Naive thymus-derived CD4-positive, alpha-beta T cell (primary cell): ENCODE measurements at regions of chr2 and their contacts with region 1.

Region 1: DNA sequence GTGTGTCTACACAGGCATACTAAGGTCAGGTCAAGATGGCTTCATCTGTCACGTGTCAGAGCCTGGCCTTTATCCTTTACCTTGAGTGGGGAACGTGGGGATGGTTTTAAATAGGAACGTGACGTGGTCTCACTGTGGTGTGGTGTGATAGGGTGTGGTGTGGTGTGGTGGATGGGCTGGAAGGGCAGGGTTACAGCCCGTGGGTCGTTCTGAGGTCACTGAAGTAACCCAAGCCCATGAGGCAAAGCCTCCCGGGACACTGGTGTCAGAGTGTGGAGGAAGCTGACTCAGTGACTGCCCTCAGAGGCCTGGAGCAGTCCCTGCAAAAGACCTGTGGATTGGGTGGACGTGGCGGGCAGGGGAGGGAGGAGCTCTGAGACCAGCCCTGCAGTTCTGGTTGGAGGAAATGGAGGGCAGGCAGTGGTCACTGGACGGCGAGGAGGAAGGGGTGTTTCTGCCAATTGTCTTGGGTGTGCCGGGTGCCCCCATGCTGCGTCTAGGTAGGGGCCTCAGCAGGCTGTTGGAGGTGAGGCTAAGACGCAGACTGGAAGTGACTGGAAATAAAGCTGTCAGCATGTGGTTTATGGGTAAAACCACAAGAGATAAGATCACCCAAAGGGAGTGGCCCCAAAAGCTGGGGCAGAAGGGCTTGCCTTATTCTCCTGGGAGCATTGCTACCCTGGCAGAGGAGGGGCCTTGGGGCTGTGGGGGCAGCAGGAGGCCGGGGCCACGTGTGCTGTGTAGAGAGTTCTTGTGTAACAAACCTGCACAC is 84.8 kb downstream of the SH3RF3 start:
- DNase-seq: peak; percentile 39 to 87 (median 81)
- ATAC-seq: peak; percentile 82
- H3K4me3 ChIP-seq: no peak overlapping the region
- H3K4me3 Mint-ChIP-seq: peak overlapping the region; percentile 56 to 83 (median 78)
- H3K27ac ChIP-seq: no peak overlapping the region
- H3K27ac Mint-ChIP-seq: peak overlapping the region; percentile 54 to 95 (median 77)
- H3K4me1 ChIP-seq: peaks cover 44 to 56% of the 10 kb centered on the region in 2 donors
- H3K4me1 Mint-ChIP-seq: peaks cover 60 to 79% (median 72%) of the 10 kb centered on the region in 7 donors
- H3K27me3 ChIP-seq: peaks cover 16 to 23% of the 10 kb centered on the region in 2 donors
- H3K27me3 Mint-ChIP-seq: peaks cover 58 to 74% (median 61%) of the 10 kb centered on the region in 5 donors

Region 2: GRCh38 chr2:108968619-108969018 is 245.2 kb before region 1 on chr2:
- CTCF ChIA-PET with region 1: no interaction called
- POLR2A ChIA-PET with region 1: no interaction called
- intact Hi-C with region 1: no loop called
- DNase-seq: no peak
- ATAC-seq: no peak
- H3K4me3 ChIP-seq: no peak overlapping the region
- H3K4me3 Mint-ChIP-seq: peak overlapping the region in 8 of 10 donors; percentile 1 to 81 (median 54)
- H3K27ac ChIP-seq: peak overlapping the region; percentile 10
- H3K27ac Mint-ChIP-seq: peak overlapping the region in 8 of 9 donors; percentile 28 to 91 (median 72)
- H3K4me1 ChIP-seq: peaks cover 21 to 71% of the 10 kb centered on the region in 2 donors
- H3K4me1 Mint-ChIP-seq: peaks cover 21 to 100% (median 95%) of the 10 kb centered on the region in 7 donors
- H3K27me3 ChIP-seq: no peaks in the 10 kb centered on the region
- H3K27me3 Mint-ChIP-seq: no peaks in the 10 kb centered on the region

Region 3: DNA sequence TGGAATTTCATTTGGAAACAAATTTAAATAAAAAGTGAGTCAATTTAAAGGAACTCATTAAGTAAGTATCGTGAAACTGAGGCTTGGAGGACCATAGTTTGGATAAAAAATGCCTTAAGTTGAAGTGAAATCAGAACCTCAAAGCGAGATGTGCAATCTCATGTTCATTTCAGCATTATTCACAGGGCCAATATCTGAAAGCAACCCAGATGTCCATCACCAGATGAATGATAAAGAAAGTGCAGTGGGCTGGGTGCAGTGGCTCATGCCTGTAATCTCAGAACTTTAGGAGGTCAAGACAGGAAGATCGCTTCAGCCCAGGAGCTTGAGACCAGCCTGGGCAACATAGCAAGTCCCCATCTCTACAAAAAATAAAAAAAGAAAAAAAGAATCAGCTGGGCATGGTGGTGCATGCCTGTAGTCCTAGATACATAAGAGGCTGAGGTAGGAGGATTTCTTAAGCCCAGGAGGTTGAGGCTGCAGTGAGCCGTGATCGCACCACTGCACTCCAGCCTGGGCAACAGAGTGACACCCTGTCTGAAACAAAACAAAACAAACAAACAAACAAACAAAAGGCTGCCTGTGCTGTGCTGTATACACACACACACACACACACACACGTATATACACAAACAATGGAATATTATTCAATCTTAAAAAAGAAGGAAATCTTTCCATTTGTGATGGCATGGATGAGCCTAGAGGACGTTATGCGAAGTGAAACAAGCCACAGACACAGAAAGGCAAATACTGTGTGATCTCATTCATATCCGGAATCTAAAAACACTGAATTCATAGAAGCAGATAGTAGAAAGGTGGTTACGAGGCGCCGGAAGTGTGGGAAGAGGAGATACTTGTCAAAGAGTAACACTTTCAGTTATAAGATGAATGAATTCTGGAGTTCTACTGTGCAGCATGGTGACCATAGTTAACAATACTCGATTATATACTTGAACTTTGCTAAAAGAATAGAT is 70.3 kb before region 1 on chr2:
- CTCF ChIA-PET with region 1: no interaction called
- POLR2A ChIA-PET with region 1: interaction called, 3 read pairs
- intact Hi-C with region 1: loop called (anchors 1 kb)
- DNase-seq: peak in 8 of 9 donors; percentile 60 to 82 (median 76)
- ATAC-seq: peak; percentile 86
- H3K4me3 ChIP-seq: peak overlapping the region; percentile 4
- H3K4me3 Mint-ChIP-seq: peak overlapping the region; percentile 39 to 80 (median 70)
- H3K27ac ChIP-seq: peak overlapping the region; percentile 37
- H3K27ac Mint-ChIP-seq: peak overlapping the region; percentile 6 to 92 (median 84)
- H3K4me1 ChIP-seq: peaks cover 13 to 23% of the 10 kb centered on the region in 2 donors
- H3K4me1 Mint-ChIP-seq: peaks cover 20 to 62% (median 51%) of the 10 kb centered on the region in 7 donors
- H3K27me3 ChIP-seq: no peaks in the 10 kb centered on the region
- H3K27me3 Mint-ChIP-seq: peaks cover 0 to 52% (median 0%) of the 10 kb centered on the region in 5 donors

Region 4: DNA sequence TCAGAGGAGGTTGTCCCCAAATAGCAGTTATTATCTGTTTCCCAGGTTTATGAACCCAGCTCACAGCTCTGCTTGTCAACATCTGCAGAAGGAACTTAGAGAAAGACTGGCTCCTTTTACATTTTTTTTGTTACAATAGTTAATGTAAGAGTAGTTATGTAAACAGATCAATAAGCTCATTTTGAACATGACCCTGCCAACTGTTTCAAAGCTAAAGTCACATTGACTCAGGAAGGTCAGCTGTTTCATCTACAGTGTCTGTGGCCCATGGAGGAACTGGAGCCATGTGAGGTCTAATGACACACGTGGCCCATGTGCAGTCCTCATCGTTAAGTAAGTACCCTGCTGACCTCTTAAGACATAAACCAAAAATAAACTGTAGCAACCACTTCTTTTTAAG is 12.3 kb after region 1 on chr2:
- CTCF ChIA-PET with region 1: no interaction called
- POLR2A ChIA-PET with region 1: no interaction called
- intact Hi-C with region 1: loop called in 1 of 2 experiments (anchors 1 kb)
- DNase-seq: no peak
- ATAC-seq: peak; percentile 60
- H3K4me3 ChIP-seq: no peak overlapping the region
- H3K4me3 Mint-ChIP-seq: no peak overlapping the region
- H3K27ac ChIP-seq: no peak overlapping the region
- H3K27ac Mint-ChIP-seq: no peak overlapping the region
- H3K4me1 ChIP-seq: no peaks in the 10 kb centered on the region
- H3K4me1 Mint-ChIP-seq: peaks cover 5 to 26% (median 10%) of the 10 kb centered on the region in 7 donors
- H3K27me3 ChIP-seq: peaks cover 0 to 4% of the 10 kb centered on the region in 2 donors
- H3K27me3 Mint-ChIP-seq: peaks cover 0 to 46% (median 0%) of the 10 kb centered on the region in 5 donors

Region 5: GRCh38 chr2:109238580-109238979 is 24.7 kb after region 1 on chr2:
- CTCF ChIA-PET with region 1: no interaction called
- POLR2A ChIA-PET with region 1: no interaction called
- intact Hi-C with region 1: loop called in 1 of 2 experiments (anchors 2 kb)
- DNase-seq: peak in 8 of 9 donors; percentile 18 to 64 (median 53)
- ATAC-seq: peak; percentile 94
- H3K4me3 ChIP-seq: no peak overlapping the region
- H3K4me3 Mint-ChIP-seq: peak overlapping the region; percentile 7 to 73 (median 43)
- H3K27ac ChIP-seq: no peak overlapping the region
- H3K27ac Mint-ChIP-seq: peak overlapping the region in 4 of 9 donors; percentile 54 to 87 (median 71)
- H3K4me1 ChIP-seq: peaks cover 6 to 12% of the 10 kb centered on the region in 2 donors
- H3K4me1 Mint-ChIP-seq: peaks cover 25 to 59% (median 44%) of the 10 kb centered on the region in 7 donors
- H3K27me3 ChIP-seq: no peaks in the 10 kb centered on the region
- H3K27me3 Mint-ChIP-seq: peaks cover 0 to 10% (median 0%) of the 10 kb centered on the region in 5 donors